T-cell (primary cell): ENCODE measurements at regions of chr5 and their contacts with region 1.

Region 1: DNA sequence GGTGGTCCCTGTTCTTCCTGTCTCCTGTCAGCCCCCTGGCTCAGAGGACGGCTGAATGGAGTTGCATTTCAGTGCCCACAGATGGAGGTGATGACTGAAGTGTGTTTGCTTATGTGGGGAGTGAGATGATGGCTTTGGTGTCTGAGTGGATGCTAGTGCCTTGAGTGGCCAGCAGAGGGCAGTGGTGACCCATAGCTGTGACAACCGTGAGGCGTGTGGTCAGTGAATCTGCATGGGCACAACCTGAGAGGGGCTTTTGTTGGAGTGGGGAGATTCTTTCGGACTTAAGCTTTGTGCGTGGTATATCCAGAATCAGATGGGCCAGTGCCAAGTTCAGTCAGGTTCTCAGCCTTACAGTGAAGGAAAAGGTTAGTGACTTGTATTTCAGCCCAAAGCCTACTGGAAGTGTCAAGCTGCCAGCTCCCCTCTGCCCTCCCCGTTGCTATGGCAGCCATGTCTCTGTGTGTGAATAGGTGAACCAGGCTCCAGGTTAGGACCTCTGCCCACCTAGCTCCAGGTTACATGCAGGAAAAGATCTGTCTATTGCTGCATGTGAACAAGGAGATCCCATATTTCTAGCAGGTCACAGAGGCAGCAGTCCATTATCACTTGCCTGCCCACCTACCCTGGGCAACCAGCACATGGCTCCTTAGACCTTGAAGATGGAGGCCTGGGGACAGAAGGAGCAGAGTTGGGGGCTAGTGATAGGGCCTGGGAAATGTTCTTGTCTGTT is 14.7 kb upstream of the CXXC5 start:
- DNase-seq: peak in 30 of 35 experiments; percentile 32 to 87 (median 54)
- ATAC-seq: peak; percentile 33 to 49 (median 42)
- H3K4me3 ChIP-seq: no peak overlapping the region
- H3K4me3 Mint-ChIP-seq: no peak overlapping the region
- H3K27ac ChIP-seq: no peak overlapping the region
- H3K27ac Mint-ChIP-seq: peak overlapping the region in 1 of 2 donors; percentile 19
- H3K4me1 ChIP-seq: peaks cover 17 to 51% of the 10 kb centered on the region in 2 experiments
- H3K4me1 Mint-ChIP-seq: peaks cover 41 to 43% (median 42%) of the 10 kb centered on the region in 3 donors
- H3K27me3 ChIP-seq: no peaks in the 10 kb centered on the region
- H3K27me3 Mint-ChIP-seq: no peaks in the 10 kb centered on the region

Region 2: DNA sequence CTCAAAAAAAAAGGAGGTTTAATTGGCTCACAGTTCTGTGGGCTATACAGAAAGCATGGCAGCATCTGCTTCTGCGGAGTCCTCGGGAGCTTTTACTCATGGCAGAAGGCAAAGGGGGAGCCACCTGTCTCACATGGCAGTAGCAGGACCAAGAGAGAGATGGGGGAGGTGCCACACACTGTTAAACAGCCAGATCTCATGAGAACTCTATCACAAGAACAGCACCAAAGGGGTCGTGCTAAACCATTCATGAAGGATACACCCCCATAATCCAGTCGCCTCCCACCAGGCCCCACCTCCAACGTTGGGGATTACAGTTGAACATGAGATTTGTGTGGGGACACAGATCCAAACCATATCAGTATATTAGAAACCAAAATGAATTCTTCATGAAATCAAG is 13.6 kb before region 1 on chr5:
- CTCF ChIA-PET with region 1: interaction called in 1 of 2 experiments, 4 read pairs
- POLR2A ChIA-PET with region 1: interaction called in 1 of 2 experiments, 11 read pairs
- DNase-seq: no peak
- ATAC-seq: no peak
- H3K4me3 ChIP-seq: no peak overlapping the region
- H3K4me3 Mint-ChIP-seq: no peak overlapping the region
- H3K27ac ChIP-seq: no peak overlapping the region
- H3K27ac Mint-ChIP-seq: no peak overlapping the region
- H3K4me1 ChIP-seq: no peaks in the 10 kb centered on the region
- H3K4me1 Mint-ChIP-seq: peaks cover 0 to 4% (median 0%) of the 10 kb centered on the region in 3 donors
- H3K27me3 ChIP-seq: no peaks in the 10 kb centered on the region
- H3K27me3 Mint-ChIP-seq: no peaks in the 10 kb centered on the region

Region 3: DNA sequence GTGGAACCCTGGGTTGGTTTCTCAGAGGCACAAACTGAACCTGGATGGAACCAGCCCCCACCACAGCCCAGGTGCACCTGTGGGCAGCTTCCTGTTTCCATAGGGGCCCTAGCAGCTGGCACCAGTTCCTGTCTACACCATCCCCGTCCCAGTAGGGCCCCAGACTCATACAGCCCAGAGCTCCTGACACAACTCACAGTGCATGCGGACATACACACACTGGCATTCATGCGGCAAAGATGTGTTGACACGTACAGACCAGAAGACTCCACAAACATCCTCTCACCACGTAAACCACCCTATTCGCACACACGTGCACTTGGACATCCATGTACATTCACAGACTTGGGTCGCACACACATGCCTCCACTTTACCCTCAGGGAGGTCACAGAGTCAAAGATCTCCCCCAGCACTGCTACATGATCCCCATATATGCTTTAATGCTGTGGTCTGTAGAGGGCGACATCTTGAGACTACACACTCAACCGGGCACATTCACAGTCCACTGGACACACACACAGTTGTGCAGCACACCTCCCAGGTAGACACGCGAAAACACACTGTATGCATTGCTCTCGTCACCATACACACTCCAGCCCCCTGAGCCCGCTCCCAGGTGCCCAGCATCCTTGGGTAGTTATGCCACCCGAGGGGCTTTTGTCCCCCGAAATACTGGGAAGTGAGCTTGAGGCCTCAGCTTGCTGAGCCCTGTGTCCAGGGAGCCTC is 37.1 kb after region 1 on chr5:
- CTCF ChIA-PET with region 1: interaction called, 3 to 7 read pairs
- POLR2A ChIA-PET with region 1: interaction called in 1 of 2 experiments, 13 read pairs
- DNase-seq: peak in 4 of 35 experiments; percentile 20 to 49 (median 34)
- ATAC-seq: peak; percentile 11 to 45 (median 36)
- H3K4me3 ChIP-seq: peak overlapping the region; percentile 59 to 70
- H3K4me3 Mint-ChIP-seq: peak overlapping the region; percentile 73 to 80 (median 79)
- H3K27ac ChIP-seq: peak overlapping the region; percentile 68
- H3K27ac Mint-ChIP-seq: peak overlapping the region; percentile 80 to 87
- H3K4me1 ChIP-seq: peaks cover 22 to 64% of the 10 kb centered on the region in 2 experiments
- H3K4me1 Mint-ChIP-seq: peaks cover 26 to 53% (median 41%) of the 10 kb centered on the region in 3 donors
- H3K27me3 ChIP-seq: peaks cover 0 to 25% of the 10 kb centered on the region in 2 experiments
- H3K27me3 Mint-ChIP-seq: peaks cover 0 to 3% of the 10 kb centered on the region in 2 donors

Region 4: GRCh38 chr5:139711067-139711905 is 77.8 kb after region 1 on chr5:
- CTCF ChIA-PET with region 1: interaction called, 4 to 11 read pairs
- POLR2A ChIA-PET with region 1: no interaction called
- DNase-seq: peak in 34 of 35 experiments; percentile 27 to 82 (median 59)
- ATAC-seq: peak; percentile 65 to 70 (median 66)
- H3K4me3 ChIP-seq: peak overlapping the region; percentile 61 to 74
- H3K4me3 Mint-ChIP-seq: peak overlapping the region; percentile 64 to 73 (median 68)
- H3K27ac ChIP-seq: peak overlapping the region; percentile 67
- H3K27ac Mint-ChIP-seq: peak overlapping the region in 1 of 2 donors; percentile 22
- H3K4me1 ChIP-seq: peaks cover 13 to 38% of the 10 kb centered on the region in 2 experiments
- H3K4me1 Mint-ChIP-seq: peaks cover 24 to 26% (median 24%) of the 10 kb centered on the region in 3 donors
- H3K27me3 ChIP-seq: peaks cover 0 to 38% of the 10 kb centered on the region in 2 experiments
- H3K27me3 Mint-ChIP-seq: peaks cover 0 to 9% of the 10 kb centered on the region in 2 donors